ENCODE measurements at regions of chr12 and their contacts with region 1.

Region 1: GRCh38 chr12:95473884-95474659 is at the start of gene METAP2:
- DNase-seq: peak; percentile 98
- H3K4me3 ChIP-seq: peak within 1 kb of the TSS; percentile 66 to 92 (median 86)
- H3K27ac ChIP-seq: peak within 1 kb of the TSS; percentile 85 to 96 (median 92)
- H3K4me1 ChIP-seq: peaks cover 17 to 53% (median 47%) of the 10 kb centered on the region in 4 donors
- H3K27me3 ChIP-seq: no peaks in the 10 kb centered on the region
- CTCF ChIP-seq: no peak
- EP300 ChIP-seq: no peak
- POLR2A ChIP-seq: peak; percentile 74
- total RNA-seq, gene METAP2: 52.6 to 76.2 (median 69.7) TPM

Region 2: DNA sequence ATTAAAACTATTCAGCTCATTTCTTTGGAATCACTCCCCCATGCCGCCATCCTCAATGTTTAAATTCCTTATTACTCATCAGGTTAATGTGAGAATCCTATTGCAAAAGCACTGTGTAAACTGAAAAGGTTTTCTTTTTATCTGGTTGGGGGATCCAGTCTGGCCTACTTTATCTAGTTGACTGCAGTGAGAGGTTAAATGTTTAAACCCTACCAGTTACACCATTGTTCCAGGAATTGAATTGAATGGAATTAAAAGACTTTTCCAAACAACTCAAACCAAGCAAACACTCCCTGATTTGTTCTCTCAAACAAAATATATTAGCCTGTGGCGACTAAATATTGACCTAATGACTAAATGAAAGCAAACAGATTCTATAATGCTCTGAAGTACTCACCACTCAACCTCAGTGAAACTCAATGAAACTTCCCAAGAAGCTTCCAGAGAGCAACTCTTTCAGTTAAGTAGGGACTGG is 156.0 kb before region 1 on chr12:
- intact Hi-C with region 1: no loop called
- DNase-seq: no peak
- H3K4me3 ChIP-seq: no peak overlapping the region
- H3K27ac ChIP-seq: no peak overlapping the region
- H3K4me1 ChIP-seq: peaks cover 5 to 21% (median 14%) of the 10 kb centered on the region in 4 donors
- H3K27me3 ChIP-seq: no peaks in the 10 kb centered on the region
- CTCF ChIP-seq: no peak
- EP300 ChIP-seq: no peak
- POLR2A ChIP-seq: no peak

Region 3: GRCh38 chr12:95385246-95386035 is 88.6 kb before region 1 on chr12:
- intact Hi-C with region 1: loop called (anchors 5 kb)
- DNase-seq: no peak
- H3K4me3 ChIP-seq: peak overlapping the region; percentile 38 to 55 (median 52)
- H3K27ac ChIP-seq: peak overlapping the region; percentile 85 to 89 (median 85)
- H3K4me1 ChIP-seq: peaks cover 17 to 51% (median 39%) of the 10 kb centered on the region in 4 donors
- H3K27me3 ChIP-seq: no peaks in the 10 kb centered on the region
- CTCF ChIP-seq: peak in 1 of 3 experiments; percentile 20
- EP300 ChIP-seq: no peak
- POLR2A ChIP-seq: no peak

Region 4: DNA sequence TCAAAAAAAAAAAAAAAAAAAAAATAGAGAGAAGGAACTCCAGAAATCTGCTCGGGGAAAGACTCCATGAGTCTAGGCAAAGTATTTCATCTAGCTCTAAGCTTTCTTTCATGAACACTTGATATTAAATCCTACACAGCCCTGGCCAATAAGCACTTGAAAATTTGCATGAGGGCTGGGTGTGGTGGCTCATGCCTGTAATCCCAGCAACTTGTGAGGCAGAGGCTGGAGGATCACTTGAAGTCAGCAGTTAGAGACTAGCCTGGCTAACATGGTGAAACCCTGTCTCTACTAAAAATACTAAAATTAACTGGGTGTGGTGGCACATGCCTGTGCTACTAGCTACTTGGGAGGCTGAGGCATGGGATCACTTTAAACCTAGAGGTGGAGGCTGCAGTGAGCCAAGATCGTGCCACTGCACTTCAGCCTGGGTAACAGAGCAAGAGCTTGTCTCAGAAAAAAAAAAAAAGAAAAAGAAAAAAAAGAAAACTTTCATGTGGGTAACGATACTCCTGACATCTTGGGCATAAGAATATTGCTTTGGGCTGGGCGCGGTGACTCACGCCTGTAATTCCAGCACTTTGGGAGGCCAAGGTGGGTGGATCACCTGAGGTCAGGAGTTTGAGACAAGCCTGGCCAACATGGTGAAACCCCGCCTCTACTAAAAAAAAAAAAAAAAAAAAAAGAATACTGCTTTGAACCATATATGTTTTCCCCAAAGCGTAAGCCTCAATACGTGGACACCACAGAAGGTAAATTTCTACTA is 13.0 kb before region 1 on chr12:
- intact Hi-C with region 1: no loop called
- DNase-seq: no peak
- H3K4me3 ChIP-seq: no peak overlapping the region
- H3K27ac ChIP-seq: no peak overlapping the region
- H3K4me1 ChIP-seq: no peaks in the 10 kb centered on the region
- H3K27me3 ChIP-seq: no peaks in the 10 kb centered on the region
- CTCF ChIP-seq: no peak
- EP300 ChIP-seq: no peak
- POLR2A ChIP-seq: no peak

Region 5: DNA sequence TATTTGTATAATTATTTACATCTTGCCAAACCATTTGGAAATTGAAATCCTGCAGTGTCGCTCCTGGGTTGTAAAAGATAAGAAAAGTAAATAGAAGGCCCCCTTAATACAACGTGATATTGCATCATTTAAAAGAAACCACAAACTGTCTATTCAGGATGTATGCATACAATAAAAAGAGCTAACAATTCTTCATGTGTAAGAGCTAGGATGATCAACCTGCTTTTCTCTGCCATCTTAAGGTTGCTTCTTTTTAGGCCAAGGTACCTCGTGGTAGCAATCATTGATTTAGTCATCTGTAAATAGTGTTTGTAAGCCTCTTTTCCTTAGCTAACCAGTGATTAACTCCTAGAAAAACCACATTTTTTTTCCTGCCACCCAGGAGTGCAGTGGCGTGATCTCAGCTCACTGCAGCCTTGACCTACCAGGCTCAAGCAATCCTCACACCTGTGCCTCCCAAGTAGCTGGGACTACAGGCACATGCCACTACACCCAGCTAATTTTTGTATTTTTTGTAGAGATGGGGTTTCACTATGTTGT is 80.5 kb after region 1 on chr12:
- intact Hi-C with region 1: no loop called
- DNase-seq: no peak
- H3K4me3 ChIP-seq: no peak overlapping the region
- H3K27ac ChIP-seq: no peak overlapping the region
- H3K4me1 ChIP-seq: no peaks in the 10 kb centered on the region
- H3K27me3 ChIP-seq: no peaks in the 10 kb centered on the region
- CTCF ChIP-seq: no peak
- EP300 ChIP-seq: no peak
- POLR2A ChIP-seq: no peak